ENCODE measurements at regions of chr16 and their contacts with region 1.

Region 1: DNA sequence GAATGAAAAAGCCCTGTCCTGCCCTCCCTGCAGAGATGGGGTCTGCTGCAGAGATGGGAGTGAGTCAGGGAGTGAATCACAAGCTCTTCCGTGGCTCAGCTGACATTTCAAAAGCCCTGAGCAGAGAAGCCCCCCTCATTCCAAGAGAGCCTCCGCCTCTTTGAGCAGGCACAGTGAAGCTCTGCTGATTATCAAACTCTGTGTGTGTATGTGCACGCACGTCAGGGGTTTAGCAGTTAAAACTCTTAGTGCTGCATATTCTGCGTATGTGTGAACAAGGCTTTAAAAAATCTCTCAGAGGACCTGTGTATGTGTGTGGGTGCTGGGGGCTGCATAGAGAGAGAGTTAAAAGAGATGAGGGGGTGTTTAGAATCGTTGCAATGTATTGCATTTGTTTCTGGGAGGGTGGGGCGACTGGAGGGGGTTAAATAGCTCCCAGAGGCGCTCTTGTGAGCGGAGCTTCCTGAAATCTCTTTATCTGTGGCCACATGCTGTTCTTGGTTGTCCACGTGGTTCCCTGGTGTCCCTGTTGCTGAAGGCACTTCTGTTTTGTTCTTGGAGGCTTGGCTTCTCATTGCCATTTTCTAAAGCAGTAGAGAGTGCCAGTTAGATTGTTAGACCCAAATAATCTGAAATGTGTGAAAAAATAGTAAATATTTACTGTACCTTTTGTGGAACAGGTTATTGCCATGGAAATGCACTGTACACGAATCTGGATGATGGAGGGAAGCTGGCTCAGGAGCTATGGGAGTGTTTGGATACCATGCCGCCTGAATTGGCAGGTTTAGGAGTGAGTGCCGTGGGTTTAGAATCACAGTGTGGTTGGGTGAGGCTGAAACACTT is 116.6 kb downstream of the PRKCB start:
- DNase-seq: peak in 6 of 9 experiments; percentile 14 to 62 (median 52)
- ATAC-seq: peak; percentile 46
- H3K4me3 ChIP-seq: no peak overlapping the region
- H3K4me3 Mint-ChIP-seq: peak overlapping the region; percentile 76
- H3K27ac ChIP-seq: peak overlapping the region; percentile 8 to 45
- H3K27ac Mint-ChIP-seq: peak overlapping the region; percentile 96
- H3K4me1 ChIP-seq: peaks cover 73% of the 10 kb centered on the region
- H3K4me1 Mint-ChIP-seq: peaks cover 91% of the 10 kb centered on the region
- H3K27me3 ChIP-seq: no peaks in the 10 kb centered on the region
- H3K27me3 Mint-ChIP-seq: no peaks in the 10 kb centered on the region
- CTCF ChIP-seq: no peak

Region 2: GRCh38 chr16:23712976-23713375 is 239.4 kb before region 1 on chr16 and contains the start of gene ERN2:
- CTCF ChIA-PET with region 1: no interaction called
- POLR2A ChIA-PET with region 1: no interaction called
- intact Hi-C with region 1: no loop called
- DNase-seq: no peak
- ATAC-seq: no peak
- H3K4me3 ChIP-seq: no peak within 1 kb of the TSS
- H3K4me3 Mint-ChIP-seq: no peak within 1 kb of the TSS
- H3K27ac ChIP-seq: no peak within 1 kb of the TSS
- H3K27ac Mint-ChIP-seq: no peak within 1 kb of the TSS
- H3K4me1 ChIP-seq: no peaks in the 10 kb centered on the region
- H3K4me1 Mint-ChIP-seq: no peaks in the 10 kb centered on the region
- H3K27me3 ChIP-seq: peaks cover 2 to 10% of the 10 kb centered on the region in 2 experiments
- H3K27me3 Mint-ChIP-seq: peaks cover 50% of the 10 kb centered on the region
- CTCF ChIP-seq: no peak
- total RNA-seq, gene ERN2: not detected

Region 3: GRCh38 chr16:23835390-23836077 is 116.8 kb before region 1 on chr16 and contains the start of gene PRKCB:
- CTCF ChIA-PET with region 1: no interaction called
- POLR2A ChIA-PET with region 1: no interaction called
- intact Hi-C with region 1: loop called (anchors 2 kb)
- DNase-seq: peak; percentile 80 to 94 (median 88)
- ATAC-seq: peak; percentile 88
- H3K4me3 ChIP-seq: peak within 1 kb of the TSS; percentile 71 to 93
- H3K4me3 Mint-ChIP-seq: peak within 1 kb of the TSS; percentile 99
- H3K27ac ChIP-seq: peak within 1 kb of the TSS; percentile 40 to 44
- H3K27ac Mint-ChIP-seq: peak within 1 kb of the TSS; percentile 95
- H3K4me1 ChIP-seq: peaks cover 48% of the 10 kb centered on the region
- H3K4me1 Mint-ChIP-seq: peaks cover 55% of the 10 kb centered on the region
- H3K27me3 ChIP-seq: no peaks in the 10 kb centered on the region
- H3K27me3 Mint-ChIP-seq: no peaks in the 10 kb centered on the region
- CTCF ChIP-seq: no peak
- total RNA-seq, gene PRKCB: 62.8 to 64.4 TPM

Region 4: DNA sequence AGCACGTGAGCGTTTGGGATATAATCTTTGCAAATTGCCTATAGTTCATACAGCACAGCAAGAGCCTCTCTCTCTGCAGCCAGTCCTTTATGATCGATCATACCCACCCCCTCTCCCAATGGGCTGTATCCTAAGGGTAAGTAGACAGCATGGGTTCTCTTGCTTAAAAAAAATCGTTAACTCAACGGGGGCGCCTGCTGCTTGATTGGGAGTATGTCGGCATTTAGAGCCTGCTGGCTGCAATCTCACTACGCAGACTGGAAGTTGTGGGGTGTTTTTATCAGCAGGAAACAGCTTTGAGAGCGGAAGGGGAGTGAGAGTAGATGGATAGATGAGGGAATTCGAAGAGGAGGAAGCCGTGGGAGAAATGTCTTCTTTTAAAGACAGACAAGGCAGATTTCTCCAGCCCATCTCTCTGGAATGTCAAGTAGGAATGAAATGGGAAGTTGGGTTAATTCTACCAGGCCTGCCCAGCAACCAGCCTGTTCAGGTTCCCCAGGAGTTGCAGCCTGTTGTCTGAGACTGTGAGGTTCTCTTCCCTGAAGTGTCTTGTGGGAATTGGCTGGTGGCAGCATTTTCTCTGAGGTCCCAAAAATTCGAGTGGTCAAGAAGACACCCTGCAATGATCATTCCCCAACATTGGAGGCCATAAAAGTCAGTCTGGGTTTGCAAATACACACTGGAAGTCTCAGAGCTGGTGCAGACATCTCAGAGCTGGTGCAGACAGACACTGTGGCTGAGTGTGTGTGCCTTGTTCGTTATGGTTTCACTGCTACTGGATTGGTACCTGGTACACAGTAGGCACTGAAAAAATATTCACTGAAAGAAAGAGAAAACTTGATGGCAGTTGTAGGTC is 50.9 kb before region 1 on chr16:
- CTCF ChIA-PET with region 1: no interaction called
- POLR2A ChIA-PET with region 1: interaction called, 7 read pairs
- intact Hi-C with region 1: loop called in 1 of 2 experiments (anchors 5 kb)
- DNase-seq: peak in 1 of 9 experiments; percentile 14
- ATAC-seq: no peak
- H3K4me3 ChIP-seq: no peak overlapping the region
- H3K4me3 Mint-ChIP-seq: peak overlapping the region; percentile 57
- H3K27ac ChIP-seq: no peak overlapping the region
- H3K27ac Mint-ChIP-seq: peak overlapping the region; percentile 77
- H3K4me1 ChIP-seq: peaks cover 51% of the 10 kb centered on the region
- H3K4me1 Mint-ChIP-seq: peaks cover 83% of the 10 kb centered on the region
- H3K27me3 ChIP-seq: no peaks in the 10 kb centered on the region
- H3K27me3 Mint-ChIP-seq: no peaks in the 10 kb centered on the region
- CTCF ChIP-seq: no peak

Region 5: GRCh38 chr16:23930791-23931190 is 21.6 kb before region 1 on chr16:
- CTCF ChIA-PET with region 1: no interaction called
- POLR2A ChIA-PET with region 1: no interaction called
- intact Hi-C with region 1: no loop called
- DNase-seq: peak in 1 of 9 experiments; percentile 25
- ATAC-seq: no peak
- H3K4me3 ChIP-seq: no peak overlapping the region
- H3K4me3 Mint-ChIP-seq: no peak overlapping the region
- H3K27ac ChIP-seq: no peak overlapping the region
- H3K27ac Mint-ChIP-seq: no peak overlapping the region
- H3K4me1 ChIP-seq: peaks cover 10% of the 10 kb centered on the region
- H3K4me1 Mint-ChIP-seq: peaks cover 64% of the 10 kb centered on the region
- H3K27me3 ChIP-seq: no peaks in the 10 kb centered on the region
- H3K27me3 Mint-ChIP-seq: no peaks in the 10 kb centered on the region
- CTCF ChIP-seq: no peak

Region 6: GRCh38 chr16:24163935-24164334 is 211.6 kb after region 1 on chr16:
- CTCF ChIA-PET with region 1: no interaction called
- POLR2A ChIA-PET with region 1: no interaction called
- intact Hi-C with region 1: no loop called
- DNase-seq: no peak
- ATAC-seq: no peak
- H3K4me3 ChIP-seq: no peak overlapping the region
- H3K4me3 Mint-ChIP-seq: no peak overlapping the region
- H3K27ac ChIP-seq: no peak overlapping the region
- H3K27ac Mint-ChIP-seq: no peak overlapping the region
- H3K4me1 ChIP-seq: no peaks in the 10 kb centered on the region
- H3K4me1 Mint-ChIP-seq: peaks cover 7% of the 10 kb centered on the region
- H3K27me3 ChIP-seq: no peaks in the 10 kb centered on the region
- H3K27me3 Mint-ChIP-seq: no peaks in the 10 kb centered on the region
- CTCF ChIP-seq: no peak